ENCODE measurements at regions of chr4 and their contacts with region 1.

Region 1: DNA sequence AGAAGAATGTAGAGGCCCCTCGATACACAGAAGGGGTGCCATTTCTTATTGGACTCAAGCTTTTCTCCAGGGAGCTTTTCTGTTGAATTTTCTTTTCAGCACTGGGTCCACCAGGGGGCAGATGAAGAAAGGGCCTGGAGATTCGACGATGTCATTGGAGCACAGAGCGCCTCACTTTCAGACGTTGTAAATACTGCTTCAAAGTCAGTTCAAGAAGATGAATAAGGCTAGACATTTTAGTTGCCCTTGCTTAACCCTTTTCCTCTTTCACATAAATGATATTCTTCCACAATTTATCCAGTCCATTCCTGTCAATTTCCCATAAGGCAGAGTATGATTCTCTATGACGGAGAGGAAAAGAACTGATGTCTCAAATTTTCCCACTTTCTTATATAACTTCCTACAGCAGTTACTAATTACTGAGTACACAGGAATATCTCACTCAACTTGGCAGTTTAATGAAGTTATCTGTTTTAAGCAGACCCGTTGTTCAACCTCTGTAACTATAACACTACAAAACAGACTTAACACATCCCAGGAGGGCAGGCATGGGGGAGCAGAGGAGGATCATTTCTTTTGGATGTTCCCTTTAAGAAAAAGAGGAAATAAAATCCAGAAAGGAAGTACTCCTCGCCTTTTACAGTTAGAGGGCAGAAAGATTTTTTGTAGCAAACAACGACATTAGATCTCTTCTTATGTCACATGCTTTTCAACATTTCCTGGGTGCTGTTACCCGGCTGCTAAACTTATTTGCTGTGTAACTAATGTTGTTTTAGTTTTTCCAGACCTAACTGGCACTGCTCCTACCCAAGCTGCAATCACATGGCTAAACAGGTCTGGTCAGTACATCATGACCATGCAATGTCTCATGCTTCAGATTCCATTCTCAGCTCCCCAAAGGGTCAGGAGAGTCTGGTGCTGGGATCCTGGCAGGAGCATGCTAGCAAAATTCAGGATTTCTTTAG is 12.2 kb upstream of the CENPU start:
- DNase-seq: peak; percentile 55
- H3K4me3 Mint-ChIP-seq: peak overlapping the region; percentile 16
- H3K27ac Mint-ChIP-seq: peak overlapping the region; percentile 27
- H3K4me1 Mint-ChIP-seq: peaks cover 21% of the 10 kb centered on the region
- H3K27me3 Mint-ChIP-seq: no peaks in the 10 kb centered on the region

Region 2: DNA sequence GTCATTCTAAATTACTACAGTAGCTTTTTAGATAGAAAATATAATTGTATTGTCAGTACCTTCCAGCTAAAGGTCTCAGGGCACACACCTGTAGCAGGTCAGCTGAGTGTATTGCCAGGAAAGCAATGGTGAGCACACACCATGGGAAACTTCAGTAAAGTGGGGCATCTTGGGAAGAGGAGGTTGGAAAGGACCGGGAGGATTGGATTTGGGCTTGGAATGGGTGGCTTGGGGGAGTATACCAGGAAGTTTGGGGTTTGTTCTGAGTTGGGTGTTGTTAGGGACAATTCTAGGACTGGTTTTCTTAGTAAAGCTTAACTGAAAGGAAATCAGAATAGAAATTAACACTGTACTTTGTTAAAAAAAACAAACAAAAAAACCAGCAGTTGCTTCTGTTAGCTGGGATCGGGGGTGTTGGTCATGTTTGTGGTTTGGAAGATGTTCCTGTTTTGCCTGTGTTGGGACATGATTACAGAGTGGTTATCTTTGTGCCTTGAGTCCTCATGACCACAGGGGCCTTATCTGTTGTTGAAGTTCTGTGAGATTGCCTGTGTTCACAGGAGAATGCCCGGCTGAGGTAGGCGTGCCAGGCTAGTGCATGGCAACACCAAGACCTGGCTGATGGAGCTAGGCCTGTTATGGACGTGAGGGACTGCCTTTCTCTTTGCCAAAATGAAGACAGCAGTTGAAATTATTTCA is 61.5 kb before region 1 on chr4:
- intact Hi-C with region 1: no loop called
- DNase-seq: no peak
- H3K4me3 Mint-ChIP-seq: no peak overlapping the region
- H3K27ac Mint-ChIP-seq: peak overlapping the region; percentile 41
- H3K4me1 Mint-ChIP-seq: peaks cover 28% of the 10 kb centered on the region
- H3K27me3 Mint-ChIP-seq: no peaks in the 10 kb centered on the region

Region 3: GRCh38 chr4:184762100-184762499 is 16.0 kb after region 1 on chr4:
- intact Hi-C with region 1: loop called (anchors 1 kb)
- DNase-seq: peak; percentile 59
- H3K4me3 Mint-ChIP-seq: peak overlapping the region; percentile 16
- H3K27ac Mint-ChIP-seq: peak overlapping the region; percentile 85
- H3K4me1 Mint-ChIP-seq: peaks cover 33% of the 10 kb centered on the region
- H3K27me3 Mint-ChIP-seq: no peaks in the 10 kb centered on the region

Region 4: GRCh38 chr4:184961660-184962059 is 215.5 kb after region 1 on chr4:
- intact Hi-C with region 1: loop called (anchors 5 kb)
- DNase-seq: no peak
- H3K4me3 Mint-ChIP-seq: no peak overlapping the region
- H3K27ac Mint-ChIP-seq: no peak overlapping the region
- H3K4me1 Mint-ChIP-seq: peaks cover 4% of the 10 kb centered on the region
- H3K27me3 Mint-ChIP-seq: peaks cover 15% of the 10 kb centered on the region

Region 5: GRCh38 chr4:185005216-185005819 is 259.2 kb after region 1 on chr4:
- intact Hi-C with region 1: loop called (anchors 1 kb)
- DNase-seq: peak; percentile 69
- H3K4me3 Mint-ChIP-seq: peak overlapping the region; percentile 46
- H3K27ac Mint-ChIP-seq: no peak overlapping the region
- H3K4me1 Mint-ChIP-seq: peaks cover 9% of the 10 kb centered on the region
- H3K27me3 Mint-ChIP-seq: peaks cover 42% of the 10 kb centered on the region

Region 6: GRCh38 chr4:185134307-185134869 is 388.3 kb after region 1 on chr4:
- intact Hi-C with region 1: loop called (anchors 1 kb)
- DNase-seq: no peak
- H3K4me3 Mint-ChIP-seq: no peak overlapping the region
- H3K27ac Mint-ChIP-seq: no peak overlapping the region
- H3K4me1 Mint-ChIP-seq: no peaks in the 10 kb centered on the region
- H3K27me3 Mint-ChIP-seq: peaks cover 52% of the 10 kb centered on the region

Measured in activated T-helper 1 cell treated with anti-CD3 and anti-CD28 coated beads, Interleukin-12 subunit alpha, Interleukin-12 subunit beta, Interleukin-2, Interleukin-4 antibody, amounts not matched to agents 30 ng/mL and 10 ng/mL and 1 ng/mL, durations not matched to agents 14 hours and 24 hours and 36 hours (primary cell).